Esophagus muscularis mucosa (tissue), 4 donors: ENCODE measurements at regions of chr9 and their contacts with region 1.

Region 1: DNA sequence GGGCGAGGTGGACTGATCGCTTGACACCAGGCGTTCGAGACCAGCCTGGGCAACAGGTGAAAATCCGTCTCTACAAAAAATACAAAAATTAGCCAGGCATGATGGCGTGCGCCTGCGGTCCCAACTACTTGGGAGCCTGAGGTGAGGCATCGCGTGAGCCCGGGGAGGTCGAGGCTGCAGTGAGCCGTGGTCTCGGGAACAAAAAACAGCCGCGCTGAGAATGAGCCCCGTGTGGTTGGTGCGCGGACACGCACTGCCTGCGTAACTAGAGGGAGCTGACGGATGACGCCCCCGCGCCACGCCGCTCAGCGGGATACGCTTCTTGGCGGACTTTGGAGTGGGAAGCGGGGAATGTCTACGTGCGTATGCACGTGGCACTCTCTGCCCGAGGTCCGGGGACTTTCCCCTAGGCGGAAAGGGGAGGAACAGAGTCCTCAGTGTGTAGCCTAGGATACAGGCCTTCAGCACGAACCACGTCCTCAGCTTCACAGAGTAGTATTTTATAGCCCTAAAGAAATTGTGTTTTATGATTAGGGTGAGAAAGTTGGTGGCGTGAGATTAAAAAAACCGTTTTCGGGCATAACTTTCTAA is at the start of gene RMRP:
- DNase-seq: peak; percentile 99
- H3K4me3 ChIP-seq: peak within 1 kb of the TSS; percentile 68 to 97 (median 82)
- H3K27ac ChIP-seq: peak within 1 kb of the TSS; percentile 95 to 99 (median 98)
- H3K4me1 ChIP-seq: peaks cover 43 to 54% (median 51%) of the 10 kb centered on the region in 4 donors
- H3K27me3 ChIP-seq: no peaks in the 10 kb centered on the region
- CTCF ChIP-seq: peak in 2 of 3 experiments; percentile 41 to 53
- EP300 ChIP-seq: peak; percentile 97
- POLR2A ChIP-seq: peak; percentile 58
- total RNA-seq, gene RMRP: 1,899 to 6,162 (median 2,510) TPM

Region 2: GRCh38 chr9:35690431-35691333 is 33.0 kb after region 1 on chr9:
- intact Hi-C with region 1: loop called (anchors 2 kb)
- DNase-seq: peak; percentile 96
- H3K4me3 ChIP-seq: peak overlapping the region; percentile 72 to 90 (median 86)
- H3K27ac ChIP-seq: peak overlapping the region; percentile 95 to 98 (median 96)
- H3K4me1 ChIP-seq: peaks cover 23 to 56% (median 47%) of the 10 kb centered on the region in 4 donors
- H3K27me3 ChIP-seq: no peaks in the 10 kb centered on the region
- CTCF ChIP-seq: no peak
- EP300 ChIP-seq: no peak
- POLR2A ChIP-seq: peak; percentile 39

Region 3: DNA sequence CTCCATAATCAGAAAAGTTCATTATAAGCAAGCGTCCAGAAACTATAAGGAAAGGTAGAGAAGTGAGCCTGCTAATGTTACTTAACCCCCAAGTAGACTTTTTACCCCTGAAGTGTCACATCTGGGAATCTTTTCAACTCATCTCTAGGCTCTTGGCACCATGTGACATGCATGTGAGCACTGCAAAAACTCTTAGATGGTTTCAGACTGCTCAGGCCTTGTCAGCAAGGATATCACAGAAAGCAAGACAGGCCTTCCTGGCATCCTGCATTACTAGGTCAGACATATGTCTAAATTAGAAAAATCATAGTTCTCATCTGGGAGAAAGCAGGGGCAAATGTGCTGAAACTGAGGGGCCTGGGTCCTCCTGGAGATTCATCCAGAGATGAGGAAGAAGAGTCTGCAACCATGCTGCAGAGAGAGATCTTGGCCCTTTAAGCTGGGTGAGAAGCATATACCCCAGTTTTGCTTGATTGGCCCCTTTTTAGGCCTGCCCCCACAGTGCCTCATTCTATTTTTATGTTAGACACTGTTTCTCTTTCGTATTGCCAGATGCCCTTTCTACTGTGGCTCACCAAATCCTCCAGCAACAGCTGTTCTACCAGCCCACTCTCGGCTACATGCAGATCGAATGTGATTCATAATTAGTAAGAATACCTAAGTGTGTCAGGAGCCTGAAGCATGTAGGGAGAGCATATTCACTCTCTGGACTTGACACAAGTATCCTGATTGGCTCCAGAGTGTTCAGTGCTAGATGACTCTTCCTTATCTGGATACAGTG is 190.3 kb after region 1 on chr9:
- intact Hi-C with region 1: no loop called
- DNase-seq: no peak
- H3K4me3 ChIP-seq: no peak overlapping the region
- H3K27ac ChIP-seq: peak overlapping the region; percentile 69 to 79 (median 73)
- H3K4me1 ChIP-seq: peaks cover 34 to 57% (median 51%) of the 10 kb centered on the region in 4 donors
- H3K27me3 ChIP-seq: no peaks in the 10 kb centered on the region
- CTCF ChIP-seq: no peak
- EP300 ChIP-seq: no peak
- POLR2A ChIP-seq: no peak

Region 4: DNA sequence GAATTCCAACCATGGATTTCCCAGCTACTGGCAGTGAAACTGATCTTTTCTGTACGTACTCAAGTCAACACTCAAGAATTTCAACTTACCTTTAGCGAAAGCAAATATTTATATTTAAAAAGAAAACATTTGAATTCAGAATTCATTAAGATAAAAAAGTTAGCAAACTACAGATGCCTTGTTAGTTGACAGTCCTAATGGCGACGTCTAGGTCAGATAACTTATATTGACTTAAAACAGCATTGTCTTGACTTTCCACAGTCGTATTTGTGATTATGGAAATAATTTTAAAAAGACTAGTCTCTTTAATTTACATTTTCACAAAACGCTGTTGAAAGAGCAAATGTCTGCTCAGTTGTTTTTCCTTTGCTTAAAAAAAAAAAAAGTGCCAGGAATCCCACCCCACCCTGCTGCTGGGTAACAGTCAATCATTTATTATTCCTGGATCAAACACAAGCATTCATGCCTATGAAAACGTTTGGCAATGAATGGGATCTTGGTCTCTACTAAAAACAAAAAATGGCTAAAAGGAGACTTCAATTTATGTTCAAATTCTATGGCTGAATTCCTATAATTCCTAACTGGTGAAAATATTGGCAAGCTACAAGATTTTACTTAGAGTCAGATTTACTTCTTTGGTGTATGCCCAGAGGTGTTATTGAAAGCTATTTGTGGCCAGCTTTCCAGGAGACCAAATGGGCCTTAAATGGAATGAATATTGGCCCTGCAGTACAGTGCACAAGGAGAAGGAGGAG is 278.3 kb after region 1 on chr9:
- intact Hi-C with region 1: no loop called
- DNase-seq: no peak
- H3K4me3 ChIP-seq: no peak overlapping the region
- H3K27ac ChIP-seq: peak overlapping the region in 3 of 4 donors; percentile 9 to 47 (median 32)
- H3K4me1 ChIP-seq: peaks cover 0 to 17% (median 13%) of the 10 kb centered on the region in 4 donors
- H3K27me3 ChIP-seq: no peaks in the 10 kb centered on the region
- CTCF ChIP-seq: no peak
- EP300 ChIP-seq: no peak
- POLR2A ChIP-seq: no peak